H1 (cell line): ENCODE measurements at regions of chr7 and their contacts with region 1.

Region 1: GRCh38 chr7:16431646-16432424 is 10.5 kb upstream of the CRPPA start:
- DNase-seq: no peak
- H3K4me3 ChIP-seq: no peak overlapping the region
- H3K27ac ChIP-seq: no peak overlapping the region
- H3K4me1 ChIP-seq: no peaks in the 10 kb centered on the region
- H3K27me3 ChIP-seq: peaks cover 0 to 1% (median 0%) of the 10 kb centered on the region in 4 experiments; a peak in 1 of 7 replicates
- CTCF ChIP-seq: peak in 2 of 3 experiments; percentile 59 to 87; a peak in 3 of 4 replicates
- EP300 ChIP-seq: no peak
- POLR2A ChIP-seq: no peak
- RAD21 ChIP-seq: peak; percentile 72 to 79

Region 2: DNA sequence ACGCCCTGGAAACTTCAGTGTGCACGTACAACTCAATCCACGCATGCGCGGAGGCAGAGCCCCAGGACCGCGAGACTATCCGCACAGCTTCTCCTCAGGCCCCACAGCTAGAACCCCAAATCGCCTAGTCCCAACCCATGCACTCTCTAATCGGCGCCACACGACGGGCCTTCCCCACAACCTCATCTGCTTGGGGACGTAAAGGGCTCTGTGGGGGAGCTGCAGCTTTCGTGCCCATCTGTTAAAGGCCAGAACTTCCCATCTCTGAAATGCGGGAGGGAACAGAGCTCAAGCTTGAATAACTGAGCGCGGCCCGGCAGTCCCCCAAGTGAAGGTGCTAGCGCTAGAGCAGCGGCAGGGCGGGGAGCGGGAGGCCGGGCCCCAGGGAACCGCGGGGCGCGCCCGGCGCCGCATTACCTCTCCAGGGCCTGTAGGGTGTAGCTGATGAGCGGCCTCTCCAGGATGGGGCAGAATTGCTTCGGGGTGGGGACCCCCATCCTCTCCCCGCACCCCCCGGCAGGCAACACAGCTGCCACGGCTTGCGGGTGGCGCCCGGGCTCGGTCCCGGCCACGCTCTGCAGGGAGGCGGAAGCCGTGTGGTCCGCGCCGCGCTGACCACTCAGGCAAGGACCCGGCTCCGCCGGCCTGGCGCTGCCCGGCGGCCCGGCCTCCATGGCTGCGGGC is 11.0 kb before region 1 on chr7:
- CTCF ChIA-PET with region 1: interaction called, 40 read pairs
- POLR2A ChIA-PET with region 1: interaction called, 3 read pairs
- DNase-seq: peak; percentile 47 to 80
- H3K4me3 ChIP-seq: peak overlapping the region; percentile 55 to 81 (median 72)
- H3K27ac ChIP-seq: no peak overlapping the region
- H3K4me1 ChIP-seq: peaks cover 0 to 5% (median 2%) of the 10 kb centered on the region in 4 experiments; a peak in 1 of 7 replicates
- H3K27me3 ChIP-seq: peaks cover 0 to 10% (median 4%) of the 10 kb centered on the region in 4 experiments; a peak in 3 of 7 replicates
- CTCF ChIP-seq: peak in 2 of 3 experiments; percentile 16 to 25; a peak in 3 of 4 replicates
- EP300 ChIP-seq: 0 out of 3 replicates have a peak, but pooled peaks of 1 of the 2 experiments have one; percentile 20
- POLR2A ChIP-seq: peak; percentile 37 to 61
- RAD21 ChIP-seq: peak; percentile 19 to 25; a peak in 2 of 4 replicates

Region 3: DNA sequence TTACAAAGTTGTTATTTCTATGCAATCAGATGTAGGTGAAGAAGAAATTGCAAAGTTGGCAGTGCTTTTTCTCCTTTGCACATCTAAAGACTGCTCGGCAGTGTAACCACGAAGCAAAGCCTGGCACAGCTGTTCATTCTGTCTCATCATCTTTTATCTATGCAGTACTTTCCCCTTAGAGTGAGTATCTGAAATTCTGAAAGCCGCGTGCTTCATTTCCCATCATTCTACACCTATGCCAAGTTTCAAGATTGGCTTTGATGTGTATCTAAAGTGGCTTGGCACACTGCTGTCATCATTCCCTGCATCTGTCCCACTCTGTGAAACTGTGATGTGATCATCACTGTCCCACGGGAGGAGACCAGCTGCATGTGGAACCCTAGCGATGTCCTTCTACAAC is 18.5 kb after region 1 on chr7:
- CTCF ChIA-PET with region 1: interaction called, 12 read pairs
- POLR2A ChIA-PET with region 1: no interaction called
- DNase-seq: no peak
- H3K4me3 ChIP-seq: no peak overlapping the region
- H3K27ac ChIP-seq: no peak overlapping the region
- H3K4me1 ChIP-seq: no peaks in the 10 kb centered on the region
- H3K27me3 ChIP-seq: no peaks in the 10 kb centered on the region
- CTCF ChIP-seq: no peak
- EP300 ChIP-seq: no peak
- POLR2A ChIP-seq: no peak
- RAD21 ChIP-seq: no peak

Region 4: DNA sequence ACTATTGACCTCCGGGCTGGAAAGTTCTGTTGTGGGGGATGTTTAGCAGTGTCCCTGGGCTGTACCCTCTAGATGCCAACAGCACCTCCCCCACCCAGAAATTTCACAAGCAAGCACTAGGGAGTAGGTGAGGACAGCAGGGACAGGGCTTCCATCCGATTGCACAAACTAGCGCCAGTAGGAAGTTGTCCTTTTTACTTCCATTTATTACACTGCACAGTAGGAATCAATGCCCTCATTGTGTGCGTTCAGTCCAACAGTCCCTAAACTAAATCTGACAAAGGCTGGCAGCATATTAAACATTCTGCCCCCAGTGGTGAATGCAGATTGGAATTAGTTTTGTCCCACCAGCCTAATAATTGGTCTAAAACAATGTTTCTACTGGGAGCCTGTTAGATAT is 40.1 kb after region 1 on chr7:
- CTCF ChIA-PET with region 1: no interaction called
- POLR2A ChIA-PET with region 1: no interaction called
- DNase-seq: no peak
- H3K4me3 ChIP-seq: no peak overlapping the region
- H3K27ac ChIP-seq: no peak overlapping the region
- H3K4me1 ChIP-seq: no peaks in the 10 kb centered on the region; a peak in 1 of 7 replicates
- H3K27me3 ChIP-seq: no peaks in the 10 kb centered on the region
- CTCF ChIP-seq: no peak
- EP300 ChIP-seq: no peak
- POLR2A ChIP-seq: no peak
- RAD21 ChIP-seq: no peak

Region 5: DNA sequence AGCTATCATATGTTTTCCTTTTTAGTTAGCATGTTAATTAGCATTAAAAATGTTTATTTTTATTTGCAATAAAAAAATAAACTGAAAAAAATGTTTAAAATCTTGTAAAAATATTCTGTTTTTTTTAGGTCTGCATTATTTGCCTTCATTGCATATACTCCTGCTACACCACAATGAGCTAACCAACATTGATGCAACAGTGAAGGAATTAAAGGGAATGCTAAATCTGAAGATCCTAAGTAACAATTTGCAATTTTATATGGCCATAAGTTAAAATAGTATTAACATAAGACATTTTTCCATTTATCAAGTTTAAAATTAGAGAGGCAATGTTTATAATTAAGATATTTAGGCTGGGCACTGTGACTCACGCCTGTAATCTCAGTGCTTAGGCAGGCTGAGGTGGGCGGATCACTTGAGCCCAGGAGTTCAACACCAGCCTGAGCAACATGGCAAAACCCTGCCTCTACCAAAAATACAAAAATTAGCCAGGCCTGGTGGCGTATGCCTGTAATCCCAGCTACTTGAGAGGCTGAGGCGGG is 127.0 kb after region 1 on chr7:
- CTCF ChIA-PET with region 1: interaction called, 27 read pairs
- POLR2A ChIA-PET with region 1: no interaction called
- DNase-seq: no peak
- H3K4me3 ChIP-seq: no peak overlapping the region
- H3K27ac ChIP-seq: no peak overlapping the region
- H3K4me1 ChIP-seq: no peaks in the 10 kb centered on the region
- H3K27me3 ChIP-seq: no peaks in the 10 kb centered on the region
- CTCF ChIP-seq: no peak
- EP300 ChIP-seq: no peak
- POLR2A ChIP-seq: no peak
- RAD21 ChIP-seq: no peak